ENCODE measurements at regions of chr22 and their contacts with region 1.

Region 1: GRCh38 chr22:38262051-38262795 is 10.6 kb downstream of the TMEM184B start:
- DNase-seq: peak; percentile 53
- ATAC-seq: peak; percentile 24
- H3K4me3 ChIP-seq: no peak overlapping the region
- H3K4me3 Mint-ChIP-seq: no peak overlapping the region
- H3K27ac ChIP-seq: no peak overlapping the region
- H3K27ac Mint-ChIP-seq: peak overlapping the region; percentile 33
- H3K4me1 ChIP-seq: peaks cover 3 to 26% of the 10 kb centered on the region in 2 donors
- H3K4me1 Mint-ChIP-seq: peaks cover 37% of the 10 kb centered on the region
- H3K27me3 ChIP-seq: no peaks in the 10 kb centered on the region
- H3K27me3 Mint-ChIP-seq: no peaks in the 10 kb centered on the region
- CTCF ChIP-seq: peak; percentile 30

Region 2: GRCh38 chr22:38272373-38273134 is 10.3 kb after region 1 on chr22 and contains the start of gene TMEM184B:
- CTCF ChIA-PET with region 1: interaction called, 6 read pairs
- POLR2A ChIA-PET with region 1: interaction called, 4 read pairs
- intact Hi-C with region 1: loop called (anchors 1 kb)
- DNase-seq: peak; percentile 90
- ATAC-seq: peak; percentile 96
- H3K4me3 ChIP-seq: peak within 1 kb of the TSS; percentile 48 to 98 (median 76)
- H3K4me3 Mint-ChIP-seq: peak within 1 kb of the TSS; percentile 94
- H3K27ac ChIP-seq: peak within 1 kb of the TSS; percentile 66 to 85
- H3K27ac Mint-ChIP-seq: peak within 1 kb of the TSS; percentile 92
- H3K4me1 ChIP-seq: peaks cover 15 to 21% of the 10 kb centered on the region in 2 donors
- H3K4me1 Mint-ChIP-seq: peaks cover 38% of the 10 kb centered on the region
- H3K27me3 ChIP-seq: peaks cover 0 to 3% (median 0%) of the 10 kb centered on the region in 4 experiments
- H3K27me3 Mint-ChIP-seq: no peaks in the 10 kb centered on the region
- CTCF ChIP-seq: no peak
- total RNA-seq, gene TMEM184B: 23.5 and 24.7 TPM in 2 replicates

Region 3: GRCh38 chr22:38398609-38399461 is 136.6 kb after region 1 on chr22:
- CTCF ChIA-PET with region 1: no interaction called
- POLR2A ChIA-PET with region 1: no interaction called
- intact Hi-C with region 1: loop called (anchors 1 kb)
- DNase-seq: peak; percentile 87
- ATAC-seq: peak; percentile 76
- H3K4me3 ChIP-seq: peak overlapping the region; percentile 2 to 75 (median 61)
- H3K4me3 Mint-ChIP-seq: peak overlapping the region; percentile 84
- H3K27ac ChIP-seq: peak overlapping the region; percentile 82 to 86
- H3K27ac Mint-ChIP-seq: peak overlapping the region; percentile 91
- H3K4me1 ChIP-seq: peaks cover 23 to 28% of the 10 kb centered on the region in 2 donors
- H3K4me1 Mint-ChIP-seq: peaks cover 36% of the 10 kb centered on the region
- H3K27me3 ChIP-seq: no peaks in the 10 kb centered on the region
- H3K27me3 Mint-ChIP-seq: no peaks in the 10 kb centered on the region
- CTCF ChIP-seq: no peak

Region 4: DNA sequence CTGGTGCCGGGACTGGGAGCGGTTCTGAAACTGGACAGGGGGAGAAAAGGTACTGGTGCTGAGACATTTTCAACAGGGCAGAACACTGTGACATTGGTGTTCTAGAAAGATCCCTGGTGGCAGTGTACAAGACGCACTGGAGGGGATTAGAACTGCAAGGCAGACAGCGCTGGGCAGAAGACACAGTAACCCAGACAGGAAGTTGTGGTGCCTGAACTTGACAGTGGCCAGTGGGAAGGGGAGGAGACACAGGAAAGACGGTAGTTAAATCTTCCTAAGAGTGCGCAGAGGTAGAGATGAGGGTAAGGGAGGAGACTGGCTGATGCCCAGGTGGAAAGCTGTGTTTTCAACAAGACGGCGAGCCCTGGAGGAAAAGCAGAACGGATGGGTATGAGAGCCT is 369.5 kb after region 1 on chr22:
- CTCF ChIA-PET with region 1: no interaction called
- POLR2A ChIA-PET with region 1: no interaction called
- intact Hi-C with region 1: no loop called
- DNase-seq: no peak
- ATAC-seq: no peak
- H3K4me3 ChIP-seq: no peak overlapping the region
- H3K4me3 Mint-ChIP-seq: no peak overlapping the region
- H3K27ac ChIP-seq: no peak overlapping the region
- H3K27ac Mint-ChIP-seq: no peak overlapping the region
- H3K4me1 ChIP-seq: no peaks in the 10 kb centered on the region
- H3K4me1 Mint-ChIP-seq: no peaks in the 10 kb centered on the region
- H3K27me3 ChIP-seq: no peaks in the 10 kb centered on the region
- H3K27me3 Mint-ChIP-seq: peaks cover 17% of the 10 kb centered on the region
- CTCF ChIP-seq: no peak